ENCODE measurements at regions of chr4 and their contacts with region 1.

Region 1: GRCh38 chr4:176319704-176320339 is at the start of gene SPCS3:
- DNase-seq: peak; percentile 94
- H3K4me3 Mint-ChIP-seq: peak within 1 kb of the TSS; percentile 84
- H3K27ac Mint-ChIP-seq: peak within 1 kb of the TSS; percentile 92
- H3K4me1 Mint-ChIP-seq: peaks cover 34% of the 10 kb centered on the region
- H3K27me3 Mint-ChIP-seq: no peaks in the 10 kb centered on the region
- total RNA-seq, gene SPCS3: 140 to 154 TPM

Region 2: DNA sequence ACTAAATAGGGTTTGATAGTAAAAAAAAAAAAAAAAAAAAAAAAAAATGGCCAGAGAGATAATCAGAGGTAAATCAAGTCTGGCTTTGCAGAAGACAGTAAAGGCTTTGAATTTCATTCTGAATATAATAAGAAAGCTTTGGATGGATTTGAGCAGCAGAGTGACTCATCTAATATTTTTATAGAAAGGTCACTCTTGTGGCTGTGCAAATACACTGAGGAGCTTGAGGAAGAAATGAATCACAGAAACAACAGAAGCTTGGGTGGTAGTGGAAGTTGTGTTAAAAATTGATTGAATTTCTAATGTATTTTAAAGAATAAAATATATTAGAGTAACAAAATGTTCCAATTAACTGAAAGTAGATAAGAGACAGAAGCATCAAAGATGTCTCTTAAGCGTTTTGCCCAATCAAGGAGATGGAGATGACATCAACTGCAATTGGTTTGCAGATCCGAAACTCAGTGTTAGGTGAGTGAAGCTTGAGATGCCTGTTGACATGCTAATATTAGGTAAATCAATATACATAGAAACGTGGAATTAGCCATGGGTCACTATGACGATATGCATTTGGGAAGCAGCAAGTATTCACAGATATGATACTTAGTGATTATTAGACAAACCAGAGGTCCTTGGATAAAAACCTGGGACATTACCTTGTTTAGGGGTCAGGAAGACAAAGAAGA is 788.3 kb before region 1 on chr4:
- CTCF ChIA-PET with region 1: no interaction called
- intact Hi-C with region 1: no loop called
- DNase-seq: no peak
- H3K4me3 Mint-ChIP-seq: no peak overlapping the region
- H3K27ac Mint-ChIP-seq: no peak overlapping the region
- H3K4me1 Mint-ChIP-seq: no peaks in the 10 kb centered on the region
- H3K27me3 Mint-ChIP-seq: no peaks in the 10 kb centered on the region

Region 3: GRCh38 chr4:176065435-176066291 is 254.2 kb before region 1 on chr4 and contains the start of gene WDR17:
- CTCF ChIA-PET with region 1: no interaction called
- intact Hi-C with region 1: loop called (anchors 1 kb)
- DNase-seq: peak; percentile 80
- H3K4me3 Mint-ChIP-seq: peak within 1 kb of the TSS; percentile 86
- H3K27ac Mint-ChIP-seq: no peak within 1 kb of the TSS
- H3K4me1 Mint-ChIP-seq: peaks cover 11% of the 10 kb centered on the region
- H3K27me3 Mint-ChIP-seq: peaks cover 20% of the 10 kb centered on the region
- total RNA-seq, gene WDR17: 1.4 to 1.7 TPM

Region 4: DNA sequence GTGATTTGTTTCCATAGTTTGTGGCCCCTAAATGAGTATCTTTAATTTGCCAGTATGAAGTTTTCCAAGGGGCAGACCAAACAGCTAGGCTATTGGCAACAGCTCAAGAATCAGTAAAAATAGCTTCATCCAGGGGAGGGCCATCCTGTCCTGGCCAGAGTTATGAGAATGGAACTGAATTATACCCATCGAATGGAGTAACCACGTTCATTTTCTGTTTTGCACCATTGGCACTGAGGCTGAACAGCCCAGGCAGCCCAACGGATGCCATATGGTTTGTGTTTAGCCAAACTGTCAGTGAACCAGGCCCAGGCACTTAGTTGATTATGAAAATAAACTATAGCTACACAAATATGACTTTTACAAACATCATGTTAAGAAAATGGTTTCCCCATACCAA is 33.1 kb before region 1 on chr4:
- CTCF ChIA-PET with region 1: no interaction called
- intact Hi-C with region 1: no loop called
- DNase-seq: no peak
- H3K4me3 Mint-ChIP-seq: no peak overlapping the region
- H3K27ac Mint-ChIP-seq: no peak overlapping the region
- H3K4me1 Mint-ChIP-seq: no peaks in the 10 kb centered on the region
- H3K27me3 Mint-ChIP-seq: peaks cover 4% of the 10 kb centered on the region

Region 5: DNA sequence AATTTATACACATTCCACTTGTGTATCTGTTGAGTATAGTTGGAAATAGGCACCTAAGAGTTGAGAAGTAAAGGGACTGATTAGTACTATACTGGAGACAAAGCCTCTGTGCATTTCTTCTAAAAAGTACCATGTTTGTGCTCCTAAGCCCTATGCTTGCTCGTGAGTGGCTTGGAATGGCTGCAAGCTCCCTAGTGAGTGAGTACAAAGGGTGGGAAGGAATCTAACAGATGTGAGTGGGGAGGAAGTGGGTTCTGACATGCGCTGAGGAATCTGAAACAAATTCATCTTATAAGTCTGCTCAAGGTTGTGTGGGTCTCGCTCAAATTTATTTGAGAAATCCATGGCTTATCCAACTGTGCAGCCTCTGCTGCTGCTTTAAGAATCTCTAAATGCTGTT is 13.3 kb after region 1 on chr4:
- CTCF ChIA-PET with region 1: interaction called, 3 read pairs
- intact Hi-C with region 1: loop called (anchors 1 kb)
- DNase-seq: no peak
- H3K4me3 Mint-ChIP-seq: no peak overlapping the region
- H3K27ac Mint-ChIP-seq: peak overlapping the region; percentile 33
- H3K4me1 Mint-ChIP-seq: peaks cover 27% of the 10 kb centered on the region
- H3K27me3 Mint-ChIP-seq: no peaks in the 10 kb centered on the region

Region 6: DNA sequence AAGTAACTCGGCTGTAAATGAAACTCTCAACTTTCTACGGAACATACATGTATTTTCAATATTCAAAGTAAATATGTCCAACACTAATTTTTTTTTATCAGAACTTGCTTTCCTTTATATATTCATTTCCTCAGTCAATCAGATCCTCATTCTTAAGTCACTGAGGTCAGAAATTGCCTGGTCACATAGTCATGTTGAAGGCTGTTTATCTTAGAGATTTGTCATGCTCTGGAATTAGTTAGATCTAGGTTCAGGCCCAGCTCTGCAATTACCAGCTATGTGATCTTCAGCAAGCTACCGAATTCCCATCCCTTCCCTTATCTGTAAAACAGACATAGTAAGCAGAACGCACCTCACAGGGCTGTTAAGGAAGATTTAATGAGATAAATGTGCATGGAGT is 228.7 kb after region 1 on chr4:
- CTCF ChIA-PET with region 1: no interaction called
- intact Hi-C with region 1: no loop called
- DNase-seq: no peak
- H3K4me3 Mint-ChIP-seq: no peak overlapping the region
- H3K27ac Mint-ChIP-seq: no peak overlapping the region
- H3K4me1 Mint-ChIP-seq: no peaks in the 10 kb centered on the region
- H3K27me3 Mint-ChIP-seq: peaks cover 1% of the 10 kb centered on the region

Region 7: GRCh38 chr4:177229331-177229730 is 909.5 kb after region 1 on chr4:
- CTCF ChIA-PET with region 1: no interaction called
- intact Hi-C with region 1: no loop called
- DNase-seq: no peak
- H3K4me3 Mint-ChIP-seq: peak overlapping the region; percentile 36
- H3K27ac Mint-ChIP-seq: no peak overlapping the region
- H3K4me1 Mint-ChIP-seq: peaks cover 6% of the 10 kb centered on the region
- H3K27me3 Mint-ChIP-seq: peaks cover 2% of the 10 kb centered on the region

Region 8: DNA sequence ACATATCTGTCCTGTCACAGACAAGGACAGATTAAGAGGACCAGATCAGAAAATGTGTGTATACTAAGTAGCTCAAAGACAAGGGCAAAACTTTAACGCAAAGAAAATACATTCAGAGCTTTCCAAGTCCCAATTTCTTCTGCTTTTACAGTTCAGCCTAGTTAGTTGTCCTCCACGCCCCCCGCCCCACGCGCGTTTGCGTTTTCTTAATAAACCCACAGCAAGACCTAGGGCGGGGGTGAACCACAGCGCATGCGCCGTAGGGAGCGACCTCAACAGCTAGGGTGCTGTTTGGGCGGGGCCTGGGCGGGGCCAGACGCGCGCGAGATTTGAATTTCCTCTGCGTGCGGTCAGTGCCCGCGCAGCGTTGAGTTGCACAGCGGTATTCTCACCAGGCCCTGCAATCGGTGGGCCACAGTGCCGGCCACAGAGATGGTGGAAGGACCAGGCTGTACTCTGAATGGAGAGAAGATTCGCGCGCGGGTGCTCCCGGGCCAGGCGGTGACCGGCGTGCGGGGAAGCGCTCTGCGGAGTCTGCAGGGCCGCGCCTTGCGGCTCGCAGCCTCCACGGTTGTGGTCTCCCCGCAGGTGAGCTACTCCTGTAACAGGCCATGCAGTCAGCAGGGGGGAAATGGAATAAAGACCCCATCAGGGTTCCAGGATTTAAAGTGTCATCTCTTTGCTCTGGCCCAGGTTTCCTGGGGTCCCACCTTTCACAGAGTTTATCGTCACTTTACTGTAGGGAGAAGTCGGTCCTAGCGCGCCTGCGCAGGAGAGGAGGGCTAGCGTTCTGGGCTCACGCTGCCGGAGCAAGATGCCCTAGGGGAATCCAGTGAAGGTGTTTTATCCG is 989.9 kb after region 1 on chr4 and contains the start of gene NEIL3:
- CTCF ChIA-PET with region 1: no interaction called
- intact Hi-C with region 1: loop called (anchors 2 kb)
- DNase-seq: peak; percentile 98
- H3K4me3 Mint-ChIP-seq: peak within 1 kb of the TSS; percentile 91
- H3K27ac Mint-ChIP-seq: peak within 1 kb of the TSS; percentile 88
- H3K4me1 Mint-ChIP-seq: peaks cover 21% of the 10 kb centered on the region
- H3K27me3 Mint-ChIP-seq: no peaks in the 10 kb centered on the region
- total RNA-seq, gene NEIL3: 21.9 to 22.7 TPM

Region 9: GRCh38 chr4:177441803-177442622 is 1122.2 kb after region 1 on chr4 and contains the start of gene AGA:
- CTCF ChIA-PET with region 1: no interaction called
- intact Hi-C with region 1: loop called (anchors 2 kb)
- DNase-seq: peak; percentile 98
- H3K4me3 Mint-ChIP-seq: peak within 1 kb of the TSS; percentile 93
- H3K27ac Mint-ChIP-seq: peak within 1 kb of the TSS; percentile 96
- H3K4me1 Mint-ChIP-seq: peaks cover 25% of the 10 kb centered on the region
- H3K27me3 Mint-ChIP-seq: no peaks in the 10 kb centered on the region
- total RNA-seq, gene AGA: 14.4 to 18.0 TPM